ENCODE measurements at regions of chr10 and their contacts with region 1.

Region 1: DNA sequence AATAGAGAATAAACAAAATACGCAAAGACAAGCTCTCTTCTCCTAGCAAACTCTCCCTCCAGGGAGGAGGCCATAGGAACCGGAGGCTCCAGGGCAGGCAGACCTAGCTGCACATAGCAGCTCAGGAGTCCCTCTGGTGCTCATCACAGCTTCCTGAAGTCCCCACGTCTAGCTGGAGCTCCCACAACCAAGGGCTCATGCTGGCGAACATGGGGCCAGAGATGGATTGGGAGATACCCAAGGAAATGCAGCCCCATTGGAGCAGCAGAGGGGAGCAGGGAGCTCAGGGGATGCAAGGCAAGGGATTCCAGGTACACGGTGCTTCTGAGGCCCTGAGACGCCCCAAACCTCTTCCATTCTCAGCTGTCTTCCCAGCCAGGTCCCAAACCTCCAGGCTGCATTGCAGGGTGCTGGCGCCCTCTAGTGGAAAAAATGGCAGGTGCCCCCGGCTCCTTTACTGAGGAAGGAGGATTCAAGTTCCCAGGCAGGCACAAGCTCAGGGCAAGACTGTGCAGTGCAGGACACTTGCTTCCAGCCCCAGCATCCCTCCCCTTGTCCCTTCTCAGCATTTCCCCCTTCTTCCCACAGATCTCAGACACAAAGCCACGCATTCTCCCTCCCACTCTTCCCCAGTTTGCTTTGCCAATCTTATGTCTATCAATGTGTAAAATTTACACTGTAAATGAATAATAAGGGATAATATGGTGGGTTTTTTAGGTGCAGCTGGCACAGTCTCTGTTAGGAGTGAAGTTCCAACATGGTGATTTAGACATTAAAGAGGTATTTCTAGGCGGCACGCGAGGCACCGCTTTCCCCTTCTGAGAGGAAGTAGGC is 46.2 kb downstream of the GPAM start:
- DNase-seq: peak; percentile 44 to 84 (median 65)
- ATAC-seq: peak; percentile 58 to 79 (median 70)
- H3K4me3 ChIP-seq: no peak overlapping the region
- H3K27ac ChIP-seq: no peak overlapping the region
- H3K4me1 ChIP-seq: peaks cover 0 to 4% (median 0%) of the 10 kb centered on the region in 12 donors
- H3K27me3 ChIP-seq: no peaks in the 10 kb centered on the region
- CTCF ChIP-seq: peak; percentile 72 to 95 (median 88)
- POLR2A ChIP-seq: no peak

Region 2: GRCh38 chr10:111756217-111757061 is 380.9 kb before region 1 on chr10:
- intact Hi-C with region 1: loop called in 8 of 10 experiments (anchors 2 to 10 kb)
- DNase-seq: peak in 2 of 5 donors; percentile 23 to 27
- ATAC-seq: peak in 1 of 4 donors; percentile 55
- H3K4me3 ChIP-seq: no peak overlapping the region
- H3K27ac ChIP-seq: no peak overlapping the region
- H3K4me1 ChIP-seq: no peaks in the 10 kb centered on the region
- H3K27me3 ChIP-seq: peaks cover 0 to 2% (median 0%) of the 10 kb centered on the region in 9 donors
- CTCF ChIP-seq: peak in 9 of 12 donors; percentile 28 to 55 (median 38)
- POLR2A ChIP-seq: no peak

Region 3: GRCh38 chr10:111762114-111762513 is 375.3 kb before region 1 on chr10:
- intact Hi-C with region 1: loop called in 8 of 10 experiments (anchors 2 to 10 kb)
- DNase-seq: no peak
- ATAC-seq: no peak
- H3K4me3 ChIP-seq: no peak overlapping the region
- H3K27ac ChIP-seq: no peak overlapping the region
- H3K4me1 ChIP-seq: no peaks in the 10 kb centered on the region
- H3K27me3 ChIP-seq: peaks cover 0 to 8% (median 0%) of the 10 kb centered on the region in 9 donors
- CTCF ChIP-seq: no peak
- POLR2A ChIP-seq: no peak

Region 4: GRCh38 chr10:112261281-112261822 is 124.0 kb after region 1 on chr10:
- intact Hi-C with region 1: no loop called
- DNase-seq: no peak
- ATAC-seq: no peak
- H3K4me3 ChIP-seq: no peak overlapping the region
- H3K27ac ChIP-seq: no peak overlapping the region
- H3K4me1 ChIP-seq: no peaks in the 10 kb centered on the region
- H3K27me3 ChIP-seq: no peaks in the 10 kb centered on the region
- CTCF ChIP-seq: no peak
- POLR2A ChIP-seq: no peak

Region 5: DNA sequence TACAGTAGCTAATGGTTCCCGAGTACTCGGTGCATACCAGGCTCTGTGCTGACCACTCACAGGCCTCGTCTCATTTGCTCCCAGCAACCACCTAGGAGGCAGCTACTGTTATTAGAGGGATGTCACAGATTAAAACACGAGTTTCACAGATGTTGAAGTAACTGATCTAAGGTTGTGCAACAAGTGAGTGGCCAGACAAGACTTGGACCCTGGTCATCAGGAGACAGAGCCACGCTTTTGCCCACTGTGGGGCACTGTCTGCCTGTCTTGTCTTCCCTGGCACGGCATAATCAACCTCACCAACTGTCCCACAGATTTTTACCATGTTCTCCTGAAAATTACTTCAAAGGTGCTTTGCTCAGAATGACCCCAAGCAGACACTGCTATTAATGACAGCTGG is 1303.8 kb after region 1 on chr10:
- intact Hi-C with region 1: no loop called
- DNase-seq: no peak
- ATAC-seq: no peak
- H3K4me3 ChIP-seq: no peak overlapping the region
- H3K27ac ChIP-seq: no peak overlapping the region
- H3K4me1 ChIP-seq: peaks cover 0 to 8% (median 0%) of the 10 kb centered on the region in 12 donors
- H3K27me3 ChIP-seq: peaks cover 0 to 6% (median 0%) of the 10 kb centered on the region in 9 donors
- CTCF ChIP-seq: peak in 3 of 12 donors; percentile 12 to 31 (median 22)
- POLR2A ChIP-seq: no peak

Measured in heart left ventricle (tissue), 16 donors.